ENCODE measurements at regions of chr1 and their contacts with region 1.

Region 1: DNA sequence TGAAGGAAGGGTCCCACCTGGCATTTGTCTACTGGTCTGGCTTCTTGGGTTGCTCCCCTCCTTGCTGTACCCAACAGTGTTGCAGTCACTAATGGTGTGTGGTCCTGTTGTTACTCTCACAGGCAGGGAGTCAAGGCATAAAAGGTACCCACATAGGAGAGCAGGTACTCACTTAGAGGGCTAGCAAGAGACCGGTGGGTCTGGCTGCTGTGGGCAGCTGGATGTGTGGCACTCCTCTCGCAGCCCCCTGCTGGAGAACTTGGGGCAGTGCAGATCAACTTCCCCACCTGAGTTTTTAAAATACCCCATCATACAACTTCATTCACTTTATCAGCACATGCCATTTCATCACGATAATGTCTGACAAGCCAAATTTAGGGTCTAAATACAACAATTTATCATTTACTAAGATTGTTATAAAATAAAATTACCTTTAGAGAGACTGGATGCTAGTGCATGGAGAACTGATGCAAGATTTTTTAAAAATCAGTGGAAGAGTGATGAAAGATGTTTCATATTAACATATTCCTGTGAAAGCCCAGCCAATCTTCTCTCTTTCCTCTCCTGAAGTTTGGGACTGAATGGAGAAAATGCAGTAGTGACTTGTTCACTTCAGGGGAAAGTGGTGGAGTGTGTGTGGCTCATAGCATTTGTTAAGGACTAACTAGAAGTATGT is 42.8 kb downstream of the ACP6 start:
- DNase-seq: peak in 41 of 42 donors; percentile 10 to 82 (median 53)

Region 2: GRCh38 chr1:147260956-147261355 is 366.6 kb before region 1 on chr1:
- intact Hi-C with region 1: no loop called
- DNase-seq: no peak

Region 3: GRCh38 chr1:147273409-147274336 is 353.9 kb before region 1 on chr1:
- intact Hi-C with region 1: loop called (anchors 5 kb)
- DNase-seq: peak in 18 of 42 donors; percentile 1 to 69 (median 32)

Region 4: GRCh38 chr1:147494998-147495580 is 132.5 kb before region 1 on chr1:
- intact Hi-C with region 1: loop called (anchors 5 kb)
- DNase-seq: peak; percentile 55 to 90 (median 78)

Region 5: GRCh38 chr1:147545133-147545532 is 82.4 kb before region 1 on chr1:
- intact Hi-C with region 1: no loop called
- DNase-seq: peak in 32 of 42 donors; percentile 4 to 73 (median 30)

Region 6: GRCh38 chr1:147868953-147869352 is 241.4 kb after region 1 on chr1:
- intact Hi-C with region 1: no loop called
- DNase-seq: no peak